ENCODE measurements at regions of chr4 and their contacts with region 1.

Region 1: GRCh38 chr4:122901247-122902010 is 21.0 kb downstream of the NUDT6 start:
- DNase-seq: no peak
- H3K4me3 ChIP-seq: no peak overlapping the region
- H3K27ac ChIP-seq: no peak overlapping the region
- H3K4me1 ChIP-seq: peaks cover 0 to 9% (median 4%) of the 10 kb centered on the region in 4 experiments; a peak in 3 of 7 replicates
- H3K27me3 ChIP-seq: no peaks in the 10 kb centered on the region
- CTCF ChIP-seq: no peak
- EP300 ChIP-seq: no peak
- POLR2A ChIP-seq: peak; percentile 1 to 26; a peak in 2 of 3 replicates
- RAD21 ChIP-seq: no peak

Region 2: GRCh38 chr4:122914292-122914904 is 13.0 kb after region 1 on chr4:
- CTCF ChIA-PET with region 1: interaction called, 14 read pairs
- POLR2A ChIA-PET with region 1: interaction called, 32 read pairs
- DNase-seq: no peak
- H3K4me3 ChIP-seq: no peak overlapping the region
- H3K27ac ChIP-seq: no peak overlapping the region
- H3K4me1 ChIP-seq: no peaks in the 10 kb centered on the region
- H3K27me3 ChIP-seq: peaks cover 0 to 3% (median 0%) of the 10 kb centered on the region in 4 experiments; a peak in 1 of 7 replicates
- CTCF ChIP-seq: no peak
- EP300 ChIP-seq: no peak
- POLR2A ChIP-seq: no peak
- RAD21 ChIP-seq: no peak

Region 3: DNA sequence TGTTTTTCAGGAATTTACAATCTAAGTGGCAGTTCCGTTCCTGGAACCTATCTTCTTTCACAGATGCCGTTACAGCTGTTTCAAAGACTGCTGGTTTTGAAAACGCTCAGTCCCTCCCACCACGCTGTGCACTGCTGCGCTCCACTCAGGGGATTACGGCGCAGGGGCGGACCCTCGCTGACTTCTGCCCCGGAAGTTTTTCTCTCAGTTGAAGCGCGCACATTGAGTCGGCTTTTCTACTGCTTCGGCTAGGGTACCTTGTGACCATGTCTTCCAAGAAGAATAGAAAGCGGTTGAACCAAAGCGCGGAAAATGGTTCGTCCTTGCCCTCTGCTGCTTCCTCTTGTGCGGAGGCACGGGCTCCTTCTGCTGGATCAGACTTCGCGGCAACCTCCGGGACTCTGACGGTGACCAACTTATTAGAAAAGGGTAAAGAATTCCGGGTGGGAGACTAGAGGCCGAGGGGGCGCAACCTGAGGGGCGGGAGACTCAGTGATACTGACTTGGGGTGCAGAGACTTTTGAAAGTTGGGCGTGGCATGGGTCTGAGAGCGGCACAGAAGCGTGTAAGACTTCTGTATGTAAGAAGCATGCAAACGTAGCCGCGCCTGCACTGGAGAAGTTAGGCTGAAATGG is 21.6 kb after region 1 on chr4:
- CTCF ChIA-PET with region 1: interaction called, 5 read pairs
- POLR2A ChIA-PET with region 1: interaction called, 32 read pairs
- DNase-seq: peak in 1 of 2 experiments; percentile 89
- H3K4me3 ChIP-seq: peak overlapping the region; percentile 78 to 93 (median 86)
- H3K27ac ChIP-seq: peak overlapping the region; percentile 10; the same call in 1 of the 2 replicates
- H3K4me1 ChIP-seq: peaks cover 0 to 6% (median 2%) of the 10 kb centered on the region in 4 experiments; a peak in 4 of 7 replicates
- H3K27me3 ChIP-seq: no peaks in the 10 kb centered on the region
- CTCF ChIP-seq: no peak
- EP300 ChIP-seq: 0 out of 3 replicates have a peak, but pooled peaks of 1 of the 2 experiments have one; percentile 14
- POLR2A ChIP-seq: peak in 1 of 2 experiments; percentile 66; a peak in 2 of 3 replicates
- RAD21 ChIP-seq: peak in 1 of 2 experiments; percentile 19; a peak in 2 of 4 replicates